Common myeloid progenitor, CD34-positive (primary cell): ENCODE measurements at regions of chr1 and their contacts with region 1.

Region 1: GRCh38 chr1:156601122-156601830 is at the start of gene GPATCH4:
- DNase-seq: peak; percentile 75 to 81 (median 80)
- H3K4me3 ChIP-seq: peak within 1 kb of the TSS; percentile 60 to 91 (median 85)
- H3K27ac ChIP-seq: peak within 1 kb of the TSS; percentile 47 to 65
- H3K4me1 ChIP-seq: peaks cover 6 to 30% (median 22%) of the 10 kb centered on the region in 4 experiments
- H3K27me3 ChIP-seq: no peaks in the 10 kb centered on the region

Region 2: DNA sequence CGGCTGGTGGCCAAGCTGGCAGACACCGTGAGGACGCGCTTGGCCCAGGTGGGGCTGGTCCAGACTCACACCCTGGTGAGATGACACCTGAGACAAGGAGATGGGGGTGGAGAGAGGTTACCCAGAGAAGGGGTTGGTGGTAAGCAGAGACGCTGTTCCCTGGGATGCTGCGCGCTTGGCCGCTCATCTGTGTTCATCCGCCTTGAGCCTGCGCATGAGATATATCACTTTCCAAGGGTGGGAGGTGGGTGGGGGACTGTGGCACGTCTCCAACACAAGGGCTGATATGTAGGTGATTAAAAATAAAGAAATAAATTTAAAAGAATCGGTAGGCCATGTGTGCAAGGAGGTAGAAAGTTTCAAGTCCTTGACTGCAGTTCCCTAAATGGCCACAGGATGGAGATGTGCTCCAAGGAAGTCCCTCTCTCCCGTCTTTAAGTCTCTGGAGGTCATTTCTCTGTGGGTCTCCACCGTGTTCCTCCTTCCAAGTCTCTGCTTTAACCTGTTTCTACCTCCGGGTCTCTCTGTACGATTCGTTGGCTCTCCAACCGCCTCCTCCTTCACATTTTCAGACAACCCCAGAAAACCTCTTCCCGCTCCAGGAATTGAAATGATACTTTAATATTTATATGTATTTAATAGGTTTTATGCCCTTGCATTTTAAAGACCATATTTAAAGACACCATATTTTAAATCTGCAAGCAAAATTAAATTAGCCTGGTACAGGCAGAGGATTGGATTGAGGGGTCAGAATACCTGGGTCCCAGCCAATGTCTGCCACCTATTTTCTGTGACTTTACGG is 17.3 kb before region 1 on chr1:
- CTCF ChIA-PET with region 1: interaction called, 63 read pairs
- POLR2A ChIA-PET with region 1: no interaction called
- DNase-seq: peak; percentile 87 to 93 (median 87)
- H3K4me3 ChIP-seq: peak overlapping the region in 1 of 7 experiments; percentile 75
- H3K27ac ChIP-seq: peak overlapping the region in 1 of 2 experiments; percentile 85
- H3K4me1 ChIP-seq: peaks cover 0 to 48% (median 33%) of the 10 kb centered on the region in 4 experiments
- H3K27me3 ChIP-seq: no peaks in the 10 kb centered on the region

Region 3: DNA sequence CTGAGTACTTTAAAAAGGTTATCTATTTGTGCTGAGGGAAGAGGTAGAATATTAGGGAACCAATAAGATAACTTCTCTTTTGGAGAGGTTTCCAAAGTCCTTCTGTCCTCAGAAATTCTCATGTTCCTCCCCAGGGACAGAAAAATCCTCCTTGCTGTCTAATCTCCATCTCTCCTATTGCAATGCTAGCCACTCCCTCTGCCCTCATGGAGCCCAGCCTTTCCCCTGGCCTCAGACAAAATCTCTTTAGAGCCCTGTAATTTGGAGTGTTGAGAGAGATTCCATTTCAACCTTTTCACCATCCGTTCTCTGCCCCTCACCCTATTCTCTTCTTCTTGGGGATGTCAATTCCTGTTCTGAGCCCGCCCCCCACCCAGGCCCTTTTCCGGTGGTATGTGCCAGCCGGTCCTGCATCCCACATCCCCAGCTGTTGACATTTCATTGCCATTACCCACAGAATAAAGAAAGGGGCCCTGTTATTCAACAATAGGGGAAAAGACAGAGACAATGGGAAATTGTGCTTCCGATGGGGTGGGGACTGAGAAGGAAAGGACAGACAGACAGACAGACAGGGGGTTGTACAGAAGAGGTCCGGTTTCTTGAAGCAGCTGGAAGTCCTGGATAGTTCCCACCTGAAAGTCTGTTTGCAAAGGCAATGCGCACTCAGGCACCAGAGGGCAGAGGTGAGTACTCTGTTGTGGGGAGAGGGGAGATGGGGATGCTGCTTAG is 17.7 kb after region 1 on chr1 and contains the start of gene HAPLN2:
- CTCF ChIA-PET with region 1: interaction called, 16 read pairs
- POLR2A ChIA-PET with region 1: no interaction called
- DNase-seq: peak; percentile 39 to 55 (median 46)
- H3K4me3 ChIP-seq: no peak within 1 kb of the TSS
- H3K27ac ChIP-seq: no peak within 1 kb of the TSS
- H3K4me1 ChIP-seq: peaks cover 0 to 13% (median 3%) of the 10 kb centered on the region in 4 experiments
- H3K27me3 ChIP-seq: peaks cover 4 to 50% (median 18%) of the 10 kb centered on the region in 5 experiments